ENCODE measurements at regions of chr6 and their contacts with region 1.

Region 1: GRCh38 chr6:18720075-18720474 is 332.9 kb downstream of the RNF144B start:
- DNase-seq: no peak
- H3K4me3 ChIP-seq: no peak overlapping the region
- H3K27ac ChIP-seq: no peak overlapping the region
- H3K4me1 ChIP-seq: no peaks in the 10 kb centered on the region
- H3K27me3 ChIP-seq: no peaks in the 10 kb centered on the region
- CTCF ChIP-seq: no peak

Region 2: GRCh38 chr6:18457065-18457812 is 262.8 kb before region 1 on chr6:
- CTCF ChIA-PET with region 1: no interaction called
- dilution Hi-C with region 1: no loop called
- in situ Hi-C with region 1: no loop called
- intact Hi-C with region 1: no loop called
- DNase-seq: peak; percentile 66
- H3K4me3 ChIP-seq: peak overlapping the region in 1 of 3 experiments; percentile 1
- H3K27ac ChIP-seq: peak overlapping the region; percentile 62
- H3K4me1 ChIP-seq: peaks cover 22% of the 10 kb centered on the region
- H3K27me3 ChIP-seq: no peaks in the 10 kb centered on the region
- CTCF ChIP-seq: no peak

Region 3: GRCh38 chr6:19024737-19025136 is 304.7 kb after region 1 on chr6:
- CTCF ChIA-PET with region 1: interaction called, 19 read pairs
- dilution Hi-C with region 1: no loop called
- in situ Hi-C with region 1: no loop called
- intact Hi-C with region 1: no loop called
- DNase-seq: peak; percentile 37
- H3K4me3 ChIP-seq: no peak overlapping the region
- H3K27ac ChIP-seq: no peak overlapping the region
- H3K4me1 ChIP-seq: no peaks in the 10 kb centered on the region
- H3K27me3 ChIP-seq: no peaks in the 10 kb centered on the region
- CTCF ChIP-seq: peak; percentile 59 to 79